Adrenal gland (tissue), 19 donors: ENCODE measurements at regions of chrX and their contacts with region 1.

Region 1: DNA sequence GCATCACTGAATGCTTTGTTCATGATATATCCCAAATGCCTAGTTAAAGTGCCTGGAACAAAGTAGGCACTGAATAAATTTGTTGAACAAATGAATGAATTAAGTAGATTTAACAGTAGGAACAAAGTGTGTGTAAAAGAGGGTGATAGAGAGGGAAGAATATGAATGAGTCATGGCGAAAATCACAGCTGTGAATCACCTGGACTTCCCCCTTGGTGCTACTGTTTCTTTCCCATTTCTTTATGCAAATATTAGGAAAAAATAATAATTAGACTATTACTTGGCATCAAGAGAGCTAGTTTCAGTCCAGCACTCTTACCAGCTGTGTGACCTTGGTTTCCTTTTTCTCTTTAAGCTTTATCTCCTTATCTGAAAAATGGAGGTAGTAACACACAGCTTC is 9.2 kb downstream of the SPIN3 start:
- DNase-seq: no peak
- H3K4me3 ChIP-seq: no peak overlapping the region
- H3K27ac ChIP-seq: no peak overlapping the region
- H3K4me1 ChIP-seq: no peaks in the 10 kb centered on the region
- H3K27me3 ChIP-seq: peaks cover 6% of the 10 kb centered on the region
- CTCF ChIP-seq: no peak
- POLR2A ChIP-seq: no peak

Region 2: GRCh38 chrX:56802921-56803849 is 183.0 kb before region 1 on chrX:
- intact Hi-C with region 1: loop called in 1 of 2 experiments (anchors 10 kb)
- DNase-seq: peak; percentile 65 to 92 (median 84)
- H3K4me3 ChIP-seq: peak overlapping the region in 2 of 4 donors; percentile 19 to 57
- H3K27ac ChIP-seq: peak overlapping the region in 3 of 5 donors; percentile 35 to 77 (median 76)
- H3K4me1 ChIP-seq: peaks cover 6 to 16% of the 10 kb centered on the region in 2 donors
- H3K27me3 ChIP-seq: no peaks in the 10 kb centered on the region
- CTCF ChIP-seq: peak; percentile 29 to 83 (median 62)
- POLR2A ChIP-seq: no peak

Region 3: GRCh38 chrX:56928546-56928945 is 57.6 kb before region 1 on chrX:
- intact Hi-C with region 1: no loop called
- DNase-seq: no peak
- H3K4me3 ChIP-seq: no peak overlapping the region
- H3K27ac ChIP-seq: no peak overlapping the region
- H3K4me1 ChIP-seq: no peaks in the 10 kb centered on the region
- H3K27me3 ChIP-seq: peaks cover 6% of the 10 kb centered on the region
- CTCF ChIP-seq: no peak
- POLR2A ChIP-seq: no peak

Region 4: GRCh38 chrX:57232658-57233360 is 246.7 kb after region 1 on chrX:
- intact Hi-C with region 1: no loop called
- DNase-seq: no peak
- H3K4me3 ChIP-seq: no peak overlapping the region
- H3K27ac ChIP-seq: no peak overlapping the region
- H3K4me1 ChIP-seq: no peaks in the 10 kb centered on the region
- H3K27me3 ChIP-seq: no peaks in the 10 kb centered on the region
- CTCF ChIP-seq: no peak
- POLR2A ChIP-seq: no peak